ENCODE measurements at regions of chr5 and their contacts with region 1.

Region 1: DNA sequence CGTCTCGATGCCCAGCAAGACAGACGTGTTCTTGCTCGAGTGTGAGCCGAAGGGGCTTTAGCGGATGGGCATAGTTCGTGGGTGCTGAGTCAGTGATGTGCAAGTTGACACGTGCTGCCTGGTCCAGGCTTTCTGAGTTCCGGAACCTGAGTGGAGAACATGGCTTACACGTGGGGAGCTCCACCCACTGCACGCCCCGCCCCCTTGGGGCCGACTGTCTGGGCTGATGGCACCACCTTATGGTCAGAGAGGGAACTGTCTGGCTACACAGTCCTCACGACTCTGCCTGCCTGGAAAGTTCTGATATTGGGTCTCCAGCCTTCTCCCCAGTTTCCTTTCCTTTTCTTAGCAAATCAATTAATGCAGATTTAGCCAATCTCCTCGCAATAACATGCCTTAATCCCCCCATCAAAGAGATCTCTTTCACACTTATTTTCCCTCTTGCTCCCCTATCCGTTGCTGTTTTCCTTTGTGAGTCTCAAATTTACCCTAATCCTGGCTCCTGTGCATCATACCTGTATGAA is 3.8 kb upstream of the STC2 start:
- DNase-seq: peak; percentile 95
- H3K4me3 Mint-ChIP-seq: no peak overlapping the region
- H3K27ac Mint-ChIP-seq: no peak overlapping the region
- H3K4me1 Mint-ChIP-seq: peaks cover 20% of the 10 kb centered on the region
- H3K27me3 Mint-ChIP-seq: peaks cover 37% of the 10 kb centered on the region

Region 2: DNA sequence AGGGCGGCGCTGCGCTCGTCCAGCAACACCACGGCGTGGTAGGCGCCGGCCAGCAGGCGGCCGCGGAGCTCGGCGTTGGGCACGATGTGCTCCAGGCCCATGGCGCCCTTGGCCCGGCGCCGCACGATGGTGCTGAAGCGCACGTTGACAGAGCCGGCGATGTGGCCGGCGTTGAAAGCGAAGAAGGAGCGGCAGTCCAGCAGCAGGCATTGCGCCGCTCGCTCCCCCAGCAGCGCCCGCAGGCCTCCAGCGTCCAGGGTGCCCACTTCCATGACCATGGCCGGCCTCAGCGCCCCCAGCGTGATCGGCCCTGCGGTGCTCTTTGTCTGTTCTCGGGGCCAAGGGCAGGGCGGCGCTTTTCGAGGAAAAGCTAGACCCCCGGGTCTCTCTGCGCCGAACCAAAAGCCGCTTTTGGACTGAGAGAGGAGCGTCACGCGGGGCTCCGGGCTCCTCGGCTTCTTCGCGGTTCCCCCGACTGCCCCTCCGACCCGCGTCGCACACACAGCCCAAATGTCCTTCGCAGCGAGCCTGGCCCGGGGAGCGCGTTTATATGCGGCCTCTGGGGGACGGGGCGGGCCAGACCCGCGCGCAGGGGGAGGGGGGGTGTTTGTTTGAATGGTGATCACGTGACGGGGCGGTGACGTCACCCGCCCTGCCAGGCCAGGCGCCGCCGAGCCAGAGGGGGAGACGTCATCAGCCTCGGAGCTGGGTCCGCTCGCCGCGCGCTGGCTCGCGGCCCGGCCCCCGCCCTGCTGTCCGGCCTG is 561.2 kb before region 1 on chr5 and contains the start of gene DUSP1:
- CTCF ChIA-PET with region 1: no interaction called
- intact Hi-C with region 1: loop called (anchors 5 kb)
- DNase-seq: peak; percentile 96
- H3K4me3 Mint-ChIP-seq: peak within 1 kb of the TSS; percentile 90
- H3K27ac Mint-ChIP-seq: peak within 1 kb of the TSS; percentile 93
- H3K4me1 Mint-ChIP-seq: peaks cover 66% of the 10 kb centered on the region
- H3K27me3 Mint-ChIP-seq: no peaks in the 10 kb centered on the region
- total RNA-seq, gene DUSP1: 7.0 to 7.3 TPM

Region 3: DNA sequence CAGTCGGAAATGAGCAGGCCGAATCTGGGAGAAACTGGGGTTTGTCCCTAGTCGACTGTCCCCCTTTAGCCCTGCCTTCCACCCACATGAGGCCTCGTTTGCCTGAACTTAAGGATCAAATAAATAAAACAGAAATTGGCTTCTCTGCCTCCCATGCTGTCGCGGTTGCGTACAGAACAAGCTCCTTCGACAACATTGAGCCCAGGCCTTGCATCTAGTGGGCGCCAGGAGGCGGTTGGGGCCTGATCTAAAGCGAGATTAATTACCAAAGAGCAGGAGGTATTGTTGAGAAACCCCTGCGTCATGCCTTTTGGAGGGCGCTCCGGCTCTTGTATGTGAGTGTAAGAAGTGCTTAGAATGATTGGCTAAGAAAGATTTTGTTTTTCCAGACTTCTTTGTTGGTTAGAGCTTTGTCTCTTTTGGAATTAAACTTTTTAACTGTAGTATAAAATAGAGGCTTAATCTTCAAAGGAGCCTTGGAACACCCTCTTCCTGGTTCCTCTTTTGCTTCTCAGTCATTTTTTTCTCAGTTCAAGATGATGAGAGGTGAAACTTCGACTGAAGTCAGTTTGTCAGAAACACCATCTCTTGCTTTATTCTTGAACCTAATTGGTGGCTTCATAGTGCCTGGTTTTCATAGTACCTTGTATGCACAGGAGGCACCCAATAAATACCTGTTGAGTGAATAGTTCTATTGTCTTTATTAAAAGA is 347.6 kb before region 1 on chr5:
- CTCF ChIA-PET with region 1: interaction called, 6 read pairs
- intact Hi-C with region 1: loop called (anchors 1 kb)
- DNase-seq: peak; percentile 91
- H3K4me3 Mint-ChIP-seq: peak overlapping the region; percentile 97
- H3K27ac Mint-ChIP-seq: peak overlapping the region; percentile 97
- H3K4me1 Mint-ChIP-seq: peaks cover 38% of the 10 kb centered on the region
- H3K27me3 Mint-ChIP-seq: no peaks in the 10 kb centered on the region

Region 4: DNA sequence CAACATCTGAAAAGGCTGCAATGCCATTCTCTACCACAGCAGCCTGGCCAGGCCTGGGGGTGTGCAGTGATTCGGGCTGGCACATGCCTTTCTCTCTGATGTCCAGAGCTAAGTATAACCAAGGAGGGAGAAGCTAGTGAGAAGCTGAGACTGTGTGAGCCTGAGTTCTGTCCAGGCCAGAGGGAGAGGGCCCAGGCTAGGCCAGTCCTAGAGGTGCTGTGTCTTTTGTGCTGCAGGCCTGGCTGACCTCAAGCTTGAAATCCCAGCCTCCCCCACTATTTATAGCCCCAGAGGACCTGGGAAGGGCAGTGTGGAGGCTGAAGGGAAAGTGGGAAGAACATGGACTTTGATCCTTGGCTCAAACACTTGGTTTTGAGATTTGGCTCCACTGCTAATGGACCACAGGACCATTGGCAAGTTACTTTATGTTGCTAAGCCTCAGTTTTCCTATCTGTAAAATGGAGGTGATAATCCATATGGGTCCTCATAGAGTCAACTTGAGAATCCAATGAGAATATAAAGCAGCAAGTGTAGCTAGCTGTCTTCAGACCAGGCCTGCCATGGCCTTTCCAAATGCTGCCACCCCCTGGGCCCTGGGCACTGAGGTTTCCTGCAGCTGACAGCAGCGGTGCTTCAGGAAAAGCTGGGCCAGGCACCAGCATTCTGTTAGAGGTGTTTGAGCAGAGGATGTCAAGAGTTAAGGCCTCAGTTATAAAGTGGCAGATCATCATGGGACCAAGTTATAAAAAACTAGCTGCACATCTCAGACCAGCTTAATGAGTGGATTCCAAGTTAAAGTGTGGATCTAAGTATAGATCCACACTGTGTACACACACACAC is 166.6 kb before region 1 on chr5:
- CTCF ChIA-PET with region 1: no interaction called
- intact Hi-C with region 1: loop called (anchors 2 kb)
- DNase-seq: no peak
- H3K4me3 Mint-ChIP-seq: no peak overlapping the region
- H3K27ac Mint-ChIP-seq: no peak overlapping the region
- H3K4me1 Mint-ChIP-seq: no peaks in the 10 kb centered on the region
- H3K27me3 Mint-ChIP-seq: no peaks in the 10 kb centered on the region

Region 5: GRCh38 chr5:173320259-173320658 is 11.8 kb before region 1 on chr5:
- CTCF ChIA-PET with region 1: interaction called, 11 read pairs
- intact Hi-C with region 1: no loop called
- DNase-seq: no peak
- H3K4me3 Mint-ChIP-seq: no peak overlapping the region
- H3K27ac Mint-ChIP-seq: no peak overlapping the region
- H3K4me1 Mint-ChIP-seq: peaks cover 15% of the 10 kb centered on the region
- H3K27me3 Mint-ChIP-seq: peaks cover 29% of the 10 kb centered on the region

Region 6: DNA sequence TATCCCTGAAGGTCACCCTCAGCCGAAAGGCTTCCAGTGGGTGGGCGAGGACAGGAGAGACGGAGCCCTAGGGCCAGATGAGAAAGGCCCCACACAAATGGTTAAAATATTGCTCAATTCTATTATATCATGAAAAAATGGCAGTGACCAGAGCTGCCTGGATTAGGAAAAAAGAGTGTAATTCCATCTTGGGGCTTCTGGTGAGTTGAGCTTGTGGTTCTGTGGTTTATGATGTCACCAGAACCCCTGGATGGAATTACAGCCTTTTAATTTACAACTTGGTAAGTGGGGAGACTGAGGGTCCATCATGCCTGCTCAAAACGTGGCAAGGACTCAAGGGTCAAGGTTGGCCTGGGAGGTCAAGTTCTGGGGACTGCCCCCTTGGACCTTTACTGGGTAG is 51.7 kb after region 1 on chr5:
- CTCF ChIA-PET with region 1: no interaction called
- intact Hi-C with region 1: no loop called
- DNase-seq: no peak
- H3K4me3 Mint-ChIP-seq: no peak overlapping the region
- H3K27ac Mint-ChIP-seq: no peak overlapping the region
- H3K4me1 Mint-ChIP-seq: no peaks in the 10 kb centered on the region
- H3K27me3 Mint-ChIP-seq: peaks cover 9% of the 10 kb centered on the region

Region 7: GRCh38 chr5:173917788-173918786 is 586.1 kb after region 1 on chr5:
- CTCF ChIA-PET with region 1: no interaction called
- intact Hi-C with region 1: loop called (anchors 5 kb)
- DNase-seq: peak; percentile 72
- H3K4me3 Mint-ChIP-seq: no peak overlapping the region
- H3K27ac Mint-ChIP-seq: no peak overlapping the region
- H3K4me1 Mint-ChIP-seq: peaks cover 18% of the 10 kb centered on the region
- H3K27me3 Mint-ChIP-seq: no peaks in the 10 kb centered on the region

Region 8: GRCh38 chr5:174159327-174160247 is 827.6 kb after region 1 on chr5:
- CTCF ChIA-PET with region 1: no interaction called
- intact Hi-C with region 1: no loop called
- DNase-seq: no peak
- H3K4me3 Mint-ChIP-seq: no peak overlapping the region
- H3K27ac Mint-ChIP-seq: no peak overlapping the region
- H3K4me1 Mint-ChIP-seq: no peaks in the 10 kb centered on the region
- H3K27me3 Mint-ChIP-seq: peaks cover 8% of the 10 kb centered on the region

Measured in activated naive CD4-positive, alpha-beta T cell treated with anti-CD3 and anti-CD28 coated beads for 36 hours (primary cell).